Natural killer cell (primary cell): ENCODE measurements at regions of chr14 and their contacts with region 1.

Region 1: GRCh38 chr14:20697273-20698017 is 8.9 kb downstream of the ANG start:
- DNase-seq: peak; percentile 61 to 82
- ATAC-seq: peak; percentile 78 to 85 (median 82)
- H3K4me3 ChIP-seq: no peak overlapping the region
- H3K4me3 Mint-ChIP-seq: no peak overlapping the region
- H3K27ac ChIP-seq: no peak overlapping the region
- H3K27ac Mint-ChIP-seq: no peak overlapping the region
- H3K4me1 ChIP-seq: no peaks in the 10 kb centered on the region
- H3K4me1 Mint-ChIP-seq: no peaks in the 10 kb centered on the region
- H3K27me3 ChIP-seq: no peaks in the 10 kb centered on the region
- H3K27me3 Mint-ChIP-seq: no peaks in the 10 kb centered on the region
- CTCF ChIP-seq: peak; percentile 85

Region 2: DNA sequence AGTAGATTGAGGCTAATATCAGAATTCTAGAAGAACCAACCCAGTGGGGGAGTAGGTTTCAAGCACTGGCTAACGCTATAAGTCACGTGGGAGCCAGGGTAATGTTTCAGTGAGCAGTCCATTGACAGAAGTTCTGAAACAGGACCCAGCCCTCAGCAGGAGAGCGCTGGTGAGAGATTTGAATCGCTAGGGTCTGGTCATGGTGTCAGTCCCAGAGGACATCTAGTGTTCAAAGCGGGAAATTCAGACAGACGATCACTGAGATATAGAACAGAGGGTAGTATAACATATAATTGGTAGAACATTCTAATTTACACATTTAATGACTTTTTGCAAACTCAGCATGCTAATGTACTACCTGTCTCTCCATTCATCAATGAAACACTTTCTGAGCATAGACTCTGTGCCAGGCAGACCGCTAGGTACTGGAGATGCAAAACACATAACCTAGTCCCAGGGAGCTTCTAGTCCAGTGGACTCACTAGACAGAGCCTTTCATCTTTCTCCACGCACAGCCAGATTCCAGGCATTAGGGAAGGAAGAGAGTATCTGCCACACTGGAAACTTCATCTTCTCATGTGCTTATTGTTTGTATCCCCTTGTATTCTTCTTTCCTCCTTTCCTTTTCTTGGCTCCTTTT is 158.3 kb after region 1 on chr14:
- intact Hi-C with region 1: loop called (anchors 1 kb)
- DNase-seq: peak; percentile 21 to 74
- ATAC-seq: peak; percentile 85 to 94 (median 91)
- H3K4me3 ChIP-seq: no peak overlapping the region
- H3K4me3 Mint-ChIP-seq: no peak overlapping the region
- H3K27ac ChIP-seq: no peak overlapping the region
- H3K27ac Mint-ChIP-seq: no peak overlapping the region
- H3K4me1 ChIP-seq: peaks cover 2% of the 10 kb centered on the region
- H3K4me1 Mint-ChIP-seq: peaks cover 0 to 6% of the 10 kb centered on the region in 2 donors
- H3K27me3 ChIP-seq: no peaks in the 10 kb centered on the region
- H3K27me3 Mint-ChIP-seq: peaks cover 0 to 23% of the 10 kb centered on the region in 2 donors
- CTCF ChIP-seq: peak; percentile 77

Region 3: GRCh38 chr14:20873370-20874177 is 176.1 kb after region 1 on chr14:
- intact Hi-C with region 1: loop called (anchors 1 kb)
- DNase-seq: peak; percentile 69 to 82
- ATAC-seq: peak; percentile 83 to 90 (median 87)
- H3K4me3 ChIP-seq: no peak overlapping the region
- H3K4me3 Mint-ChIP-seq: no peak overlapping the region
- H3K27ac ChIP-seq: no peak overlapping the region
- H3K27ac Mint-ChIP-seq: peak overlapping the region in 1 of 2 donors; percentile 18
- H3K4me1 ChIP-seq: peaks cover 7% of the 10 kb centered on the region
- H3K4me1 Mint-ChIP-seq: peaks cover 8 to 13% of the 10 kb centered on the region in 2 donors
- H3K27me3 ChIP-seq: no peaks in the 10 kb centered on the region
- H3K27me3 Mint-ChIP-seq: peaks cover 10 to 29% of the 10 kb centered on the region in 2 donors
- CTCF ChIP-seq: peak; percentile 79